Heart left ventricle (tissue), 16 donors: ENCODE measurements at regions of chr11 and their contacts with region 1.

Region 1: GRCh38 chr11:61509043-61510029 is 787 bp downstream of the LRRC10B start:
- DNase-seq: peak; percentile 54 to 85 (median 80)
- ATAC-seq: peak; percentile 46 to 94 (median 85)
- H3K4me3 ChIP-seq: peak overlapping the region in 11 of 12 donors; percentile 13 to 51 (median 44)
- H3K27ac ChIP-seq: peak overlapping the region in 11 of 12 donors; percentile 9 to 77 (median 61)
- H3K4me1 ChIP-seq: peaks cover 0 to 20% (median 9%) of the 10 kb centered on the region in 12 donors
- H3K27me3 ChIP-seq: peaks cover 7 to 70% (median 39%) of the 10 kb centered on the region in 9 donors
- CTCF ChIP-seq: peak; percentile 19 to 74 (median 52)
- POLR2A ChIP-seq: no peak

Region 2: GRCh38 chr11:61453695-61454094 is 55.6 kb before region 1 on chr11:
- intact Hi-C with region 1: loop called in 2 of 10 experiments (anchors 10 kb)
- DNase-seq: no peak
- ATAC-seq: peak in 2 of 4 donors; percentile 24 to 45
- H3K4me3 ChIP-seq: no peak overlapping the region
- H3K27ac ChIP-seq: peak overlapping the region in 6 of 12 donors; percentile 0 to 63 (median 14)
- H3K4me1 ChIP-seq: peaks cover 0 to 25% (median 8%) of the 10 kb centered on the region in 12 donors
- H3K27me3 ChIP-seq: no peaks in the 10 kb centered on the region
- CTCF ChIP-seq: no peak
- POLR2A ChIP-seq: no peak

Region 3: DNA sequence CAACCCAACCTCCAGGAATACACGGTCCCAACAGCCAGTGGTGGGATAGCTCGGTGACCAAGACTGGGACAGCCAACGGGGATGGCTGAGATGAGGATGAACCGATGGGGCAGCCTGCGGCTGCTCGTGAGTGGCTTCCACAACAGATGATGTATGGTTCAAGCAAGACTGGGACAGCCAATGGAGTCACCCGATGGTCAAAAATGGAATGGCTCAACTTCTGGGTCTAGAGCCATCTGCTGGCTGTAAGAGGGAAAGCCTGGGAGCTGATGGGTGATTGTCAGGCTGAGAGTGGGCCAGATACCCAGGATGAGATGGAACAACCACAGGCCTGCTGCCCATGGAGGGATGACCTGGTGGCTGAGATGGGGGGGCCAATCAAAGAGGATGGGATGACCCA is 36.0 kb after region 1 on chr11:
- intact Hi-C with region 1: no loop called
- DNase-seq: no peak
- ATAC-seq: no peak
- H3K4me3 ChIP-seq: no peak overlapping the region
- H3K27ac ChIP-seq: no peak overlapping the region
- H3K4me1 ChIP-seq: peaks cover 0 to 19% (median 5%) of the 10 kb centered on the region in 12 donors
- H3K27me3 ChIP-seq: no peaks in the 10 kb centered on the region
- CTCF ChIP-seq: peak in 5 of 12 donors; percentile 7 to 23 (median 10)
- POLR2A ChIP-seq: no peak